B cell (primary cell): ENCODE measurements at regions of chr4 and their contacts with region 1.

Region 1: DNA sequence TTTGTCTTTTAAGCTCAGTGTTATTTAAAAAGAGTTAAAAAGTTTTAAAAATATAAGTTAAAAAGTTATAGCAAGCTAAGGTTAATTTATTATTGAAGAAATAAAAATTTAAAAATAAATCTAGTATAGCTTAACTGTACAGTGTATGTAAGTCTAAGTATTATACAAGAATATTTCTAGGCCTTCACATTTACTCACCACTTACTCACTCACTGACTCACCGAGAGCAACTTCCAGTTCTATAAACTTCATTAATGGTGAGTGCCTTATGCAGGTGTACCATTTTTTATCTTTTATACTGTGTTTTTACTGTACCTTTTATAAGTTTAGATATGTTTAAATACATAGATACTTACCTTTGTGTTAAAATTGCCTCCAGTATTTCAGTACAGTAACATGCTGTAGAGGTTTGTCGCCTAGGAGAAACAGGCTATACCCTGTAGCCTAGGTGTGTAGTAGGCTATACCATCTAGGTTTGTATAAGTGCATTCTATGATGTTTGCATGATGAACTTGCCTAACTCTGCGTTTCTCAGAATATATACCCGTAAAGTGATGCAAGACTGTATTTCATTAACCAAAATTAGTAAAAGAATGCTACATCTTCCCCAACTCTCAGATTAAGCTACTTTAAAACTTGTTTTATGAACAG is 202.9 kb downstream of the CFAP299 start:
- DNase-seq: no peak
- ATAC-seq: no peak
- H3K4me3 ChIP-seq: no peak overlapping the region
- H3K4me3 Mint-ChIP-seq: no peak overlapping the region
- H3K27ac ChIP-seq: no peak overlapping the region
- H3K27ac Mint-ChIP-seq: no peak overlapping the region
- H3K4me1 ChIP-seq: no peaks in the 10 kb centered on the region
- H3K4me1 Mint-ChIP-seq: peaks cover 5% of the 10 kb centered on the region
- H3K27me3 ChIP-seq: peaks cover 0 to 12% (median 4%) of the 10 kb centered on the region in 4 experiments
- H3K27me3 Mint-ChIP-seq: no peaks in the 10 kb centered on the region
- CTCF ChIP-seq: no peak

Region 2: GRCh38 chr4:79467246-79467932 is 1071.0 kb before region 1 on chr4:
- CTCF ChIA-PET with region 1: no interaction called
- POLR2A ChIA-PET with region 1: no interaction called
- intact Hi-C with region 1: no loop called
- DNase-seq: no peak
- ATAC-seq: no peak
- H3K4me3 ChIP-seq: no peak overlapping the region
- H3K4me3 Mint-ChIP-seq: no peak overlapping the region
- H3K27ac ChIP-seq: no peak overlapping the region
- H3K27ac Mint-ChIP-seq: no peak overlapping the region
- H3K4me1 ChIP-seq: no peaks in the 10 kb centered on the region
- H3K4me1 Mint-ChIP-seq: no peaks in the 10 kb centered on the region
- H3K27me3 ChIP-seq: no peaks in the 10 kb centered on the region
- H3K27me3 Mint-ChIP-seq: no peaks in the 10 kb centered on the region
- CTCF ChIP-seq: no peak

Region 3: DNA sequence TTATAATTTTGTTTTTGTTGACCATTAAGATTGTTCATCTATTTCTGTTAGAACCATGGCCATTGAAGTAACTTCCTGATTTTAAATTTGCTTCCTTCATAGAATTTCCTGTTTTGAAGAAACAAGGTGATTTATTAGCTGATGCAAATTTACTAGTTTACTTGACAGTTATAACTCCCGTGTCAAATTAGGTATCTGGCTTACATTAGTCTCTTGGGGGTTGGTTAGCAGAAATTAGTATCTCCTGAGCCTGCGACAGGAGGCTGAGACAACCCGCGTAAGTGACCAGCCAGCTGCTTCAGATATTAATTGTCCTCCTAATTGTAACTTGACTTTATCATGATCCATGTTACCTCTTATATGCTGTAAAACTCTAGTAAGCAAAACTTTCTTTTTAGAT is 48.6 kb before region 1 on chr4:
- CTCF ChIA-PET with region 1: no interaction called
- POLR2A ChIA-PET with region 1: no interaction called
- intact Hi-C with region 1: loop called (anchors 10 kb)
- DNase-seq: peak; percentile 18
- ATAC-seq: peak; percentile 14
- H3K4me3 ChIP-seq: no peak overlapping the region
- H3K4me3 Mint-ChIP-seq: peak overlapping the region; percentile 19
- H3K27ac ChIP-seq: no peak overlapping the region
- H3K27ac Mint-ChIP-seq: no peak overlapping the region
- H3K4me1 ChIP-seq: peaks cover 14 to 19% of the 10 kb centered on the region in 2 donors
- H3K4me1 Mint-ChIP-seq: peaks cover 39% of the 10 kb centered on the region
- H3K27me3 ChIP-seq: no peaks in the 10 kb centered on the region
- H3K27me3 Mint-ChIP-seq: no peaks in the 10 kb centered on the region
- CTCF ChIP-seq: no peak

Region 4: DNA sequence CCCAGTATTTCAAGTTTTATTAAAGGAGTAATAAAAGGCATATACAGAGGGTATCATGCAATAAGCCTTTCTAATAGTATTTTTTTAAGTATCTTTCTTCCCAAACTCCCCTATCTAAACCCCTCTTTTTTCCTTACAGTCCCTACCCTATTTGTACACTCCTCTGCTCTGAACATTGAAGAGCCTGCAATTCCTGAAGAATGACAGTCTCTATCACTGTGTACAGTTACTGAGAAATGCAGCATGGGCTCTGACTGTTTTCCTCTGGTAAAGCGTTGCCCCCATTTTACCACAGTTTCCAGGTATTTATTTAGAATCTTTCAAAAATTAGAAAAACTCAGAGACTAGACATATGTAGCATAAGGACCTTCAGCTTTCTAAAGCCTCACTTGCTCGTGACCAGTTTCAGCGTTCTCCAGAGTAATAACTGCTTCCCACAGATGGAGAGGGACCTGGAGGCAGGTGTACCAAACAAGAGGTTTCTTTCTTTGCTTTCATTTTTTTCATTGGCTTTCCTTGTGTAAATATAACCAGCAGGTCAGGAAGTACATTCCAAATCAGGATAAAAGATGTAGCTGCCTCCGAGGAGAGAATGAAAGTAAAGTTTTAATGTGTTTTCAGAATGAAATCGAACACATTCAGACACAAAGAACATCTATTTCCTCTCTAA is 27.9 kb after region 1 on chr4:
- CTCF ChIA-PET with region 1: no interaction called
- POLR2A ChIA-PET with region 1: no interaction called
- intact Hi-C with region 1: no loop called
- DNase-seq: no peak
- ATAC-seq: no peak
- H3K4me3 ChIP-seq: no peak overlapping the region
- H3K4me3 Mint-ChIP-seq: no peak overlapping the region
- H3K27ac ChIP-seq: no peak overlapping the region
- H3K27ac Mint-ChIP-seq: no peak overlapping the region
- H3K4me1 ChIP-seq: no peaks in the 10 kb centered on the region
- H3K4me1 Mint-ChIP-seq: no peaks in the 10 kb centered on the region
- H3K27me3 ChIP-seq: no peaks in the 10 kb centered on the region
- H3K27me3 Mint-ChIP-seq: peaks cover 5% of the 10 kb centered on the region
- CTCF ChIP-seq: no peak